K562 (cell line): ENCODE measurements at regions of chr16 and their contacts with region 1.

Region 1: DNA sequence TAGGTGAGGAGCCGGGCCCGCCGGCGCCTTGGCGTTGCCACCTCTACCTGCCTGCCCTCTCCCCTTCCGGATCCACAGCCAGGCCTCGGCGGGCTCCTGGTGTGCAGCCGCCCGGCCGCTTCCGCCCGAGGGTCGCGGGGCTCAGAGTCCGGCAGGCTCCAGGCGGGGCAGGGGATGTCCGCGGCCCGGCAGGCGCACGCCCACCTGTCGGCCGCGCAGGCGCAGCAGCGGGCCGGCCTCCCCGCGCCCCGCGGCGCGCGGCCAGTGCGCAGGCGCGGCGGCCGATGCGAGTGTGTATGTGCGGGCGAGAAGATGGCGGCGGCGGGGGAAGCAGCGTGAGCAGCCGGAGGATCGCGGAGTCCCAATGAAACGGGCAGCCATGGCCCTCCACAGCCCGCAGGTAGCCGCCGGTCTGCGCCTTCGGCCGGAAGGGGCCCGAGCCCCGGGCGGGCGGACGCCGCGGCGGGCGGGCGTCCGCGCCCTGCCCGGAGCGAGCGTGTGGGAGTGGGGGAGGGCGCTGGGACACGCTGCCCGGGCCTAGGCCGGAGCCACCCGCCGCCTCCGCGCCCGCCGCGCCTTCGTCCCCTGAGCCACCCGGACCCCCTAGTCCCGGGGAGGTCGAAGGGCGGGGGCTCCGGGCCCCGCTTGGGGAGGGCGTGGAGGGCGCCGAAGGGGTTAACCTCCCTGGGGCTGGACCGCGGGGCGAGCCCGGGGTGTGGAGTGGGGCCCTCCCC is at the start of gene USP10:
- DNase-seq: peak; percentile 91 to 100 (median 100)
- ATAC-seq: peak; percentile 80
- H3K4me3 ChIP-seq: peak within 1 kb of the TSS; percentile 99
- H3K27ac ChIP-seq: peak within 1 kb of the TSS; percentile 90
- H3K4me1 ChIP-seq: peaks cover 31 to 32% of the 10 kb centered on the region in 2 experiments
- H3K27me3 ChIP-seq: no peaks in the 10 kb centered on the region
- CTCF ChIP-seq: no peak
- EP300 ChIP-seq: no peak
- POLR2A ChIP-seq: peak; percentile 68
- RAD21 ChIP-seq: no peak
- polyA plus RNA-seq, gene USP10: 61.7 to 61.9 TPM

Region 2: DNA sequence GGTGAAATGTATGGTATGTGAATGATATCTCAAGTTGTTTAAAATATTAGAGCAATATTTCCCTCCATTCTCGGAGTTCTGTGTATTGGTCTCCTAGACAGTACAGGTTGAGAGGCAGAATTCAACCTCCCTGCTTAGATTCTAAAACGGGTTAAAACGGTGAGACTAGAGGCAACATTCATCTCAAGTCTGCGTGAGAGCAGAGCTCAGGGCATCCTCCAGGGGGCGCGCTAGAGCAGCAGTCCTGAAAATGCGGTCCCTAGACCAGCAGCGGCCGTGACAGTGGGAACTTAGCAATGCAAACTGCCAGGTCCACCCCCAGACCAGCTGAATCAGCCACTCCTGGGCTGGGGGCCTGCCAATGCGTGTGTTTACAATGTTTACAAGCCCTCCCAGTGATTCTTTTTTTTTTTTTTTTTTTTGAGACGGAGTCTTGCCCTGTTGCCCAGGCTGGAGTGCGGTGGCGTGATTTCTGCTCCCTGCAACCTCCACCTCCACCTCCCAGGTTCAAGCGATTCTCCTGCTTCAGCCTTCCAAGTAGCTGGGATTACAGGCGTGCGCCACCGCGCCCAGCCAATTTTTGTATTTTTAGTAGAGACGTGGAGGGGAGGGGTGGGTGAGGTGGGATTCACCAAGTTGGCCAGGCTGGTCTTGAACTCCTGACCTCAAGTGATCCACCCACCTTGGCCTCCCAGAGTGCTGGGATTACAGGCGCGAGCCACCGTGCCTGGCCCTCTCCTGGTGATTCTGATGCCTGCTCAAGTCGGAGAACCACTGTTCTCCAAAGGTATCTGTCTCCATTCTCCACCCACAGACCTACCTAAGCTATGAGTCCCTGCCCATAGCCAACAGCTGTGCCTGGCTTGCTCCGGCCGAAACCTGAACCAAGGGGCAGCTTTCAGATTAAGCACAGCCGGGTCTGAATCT is 27.3 kb before region 1 on chr16:
- CTCF ChIA-PET with region 1: no interaction called
- POLR2A ChIA-PET with region 1: interaction called, 14 read pairs
- in situ Hi-C with region 1: no loop called
- intact Hi-C with region 1: no loop called
- DNase-seq: peak; percentile 87 to 91 (median 89)
- ATAC-seq: peak; percentile 95
- H3K4me3 ChIP-seq: no peak overlapping the region
- H3K27ac ChIP-seq: no peak overlapping the region
- H3K4me1 ChIP-seq: peaks cover 10 to 15% of the 10 kb centered on the region in 2 experiments; a peak in 4 of 5 replicates
- H3K27me3 ChIP-seq: peaks cover 0 to 15% of the 10 kb centered on the region in 2 experiments; a peak in 3 of 5 replicates
- CTCF ChIP-seq: peak; percentile 93 to 97 (median 97)
- EP300 ChIP-seq: no peak
- POLR2A ChIP-seq: no peak
- RAD21 ChIP-seq: peak; percentile 81 to 93

Region 3: GRCh38 chr16:84714028-84714427 is 14.1 kb after region 1 on chr16:
- CTCF ChIA-PET with region 1: no interaction called
- POLR2A ChIA-PET with region 1: interaction called, 26 read pairs
- in situ Hi-C with region 1: no loop called
- intact Hi-C with region 1: no loop called
- DNase-seq: no peak
- ATAC-seq: no peak
- H3K4me3 ChIP-seq: no peak overlapping the region
- H3K27ac ChIP-seq: no peak overlapping the region
- H3K4me1 ChIP-seq: peaks cover 11 to 18% of the 10 kb centered on the region in 2 experiments; a peak in 4 of 5 replicates
- H3K27me3 ChIP-seq: no peaks in the 10 kb centered on the region
- CTCF ChIP-seq: no peak
- EP300 ChIP-seq: no peak
- POLR2A ChIP-seq: no peak
- RAD21 ChIP-seq: no peak